ENCODE measurements at regions of chr11 and their contacts with region 1.

Region 1: GRCh38 chr11:43687120-43687791 is 6.7 kb downstream of the HSD17B12 start:
- DNase-seq: no peak
- ATAC-seq: peak; percentile 34
- H3K4me3 ChIP-seq: no peak overlapping the region
- H3K27ac ChIP-seq: peak overlapping the region; percentile 20; the same call in 1 of the 3 replicates
- H3K4me1 ChIP-seq: peaks cover 8 to 49% of the 10 kb centered on the region in 2 experiments
- H3K27me3 ChIP-seq: no peaks in the 10 kb centered on the region
- CTCF ChIP-seq: no peak
- EP300 ChIP-seq: no peak
- POLR2A ChIP-seq: no peak
- RAD21 ChIP-seq: no peak

Region 2: DNA sequence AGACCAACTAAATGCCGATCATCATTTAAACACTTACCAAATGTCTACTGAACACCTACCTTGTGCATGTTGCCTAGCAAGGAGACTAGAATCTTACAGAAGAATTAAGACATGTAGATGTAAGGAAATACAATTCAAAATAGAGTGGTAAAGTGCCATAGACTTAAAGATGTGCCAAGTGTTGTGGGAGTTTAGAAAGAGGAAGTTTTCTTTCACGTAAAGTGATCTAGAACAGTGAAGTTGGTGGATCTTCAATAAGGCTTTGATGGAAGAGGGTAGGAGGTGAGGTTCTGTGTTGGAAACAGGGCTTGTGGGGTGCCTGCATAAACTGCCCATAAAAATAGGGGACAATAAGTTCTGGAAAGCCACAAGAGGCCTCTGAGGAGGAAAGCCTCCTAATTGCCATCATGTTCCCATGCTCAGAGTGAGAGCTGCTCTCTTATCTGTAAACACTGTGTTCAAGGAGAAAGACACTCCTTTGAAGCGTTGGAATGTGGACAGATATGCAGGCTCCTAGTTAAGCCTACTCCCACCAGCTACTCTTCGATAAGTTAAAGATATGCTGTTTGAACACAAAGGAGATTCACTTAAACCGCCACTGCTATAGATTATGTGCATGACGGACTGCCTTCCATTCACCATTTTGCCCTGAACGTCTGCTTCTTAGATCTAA is 60.0 kb after region 1 on chr11:
- CTCF ChIA-PET with region 1: no interaction called
- POLR2A ChIA-PET with region 1: no interaction called
- in situ Hi-C with region 1: no loop called
- intact Hi-C with region 1: loop called (anchors 5 kb)
- DNase-seq: peak in 2 of 4 experiments; percentile 51 to 91
- ATAC-seq: peak; percentile 78
- H3K4me3 ChIP-seq: no peak overlapping the region
- H3K27ac ChIP-seq: peak overlapping the region; percentile 87
- H3K4me1 ChIP-seq: peaks cover 8 to 34% of the 10 kb centered on the region in 2 experiments
- H3K27me3 ChIP-seq: no peaks in the 10 kb centered on the region
- CTCF ChIP-seq: no peak
- EP300 ChIP-seq: peak; percentile 83; the same call in 1 of the 2 replicates
- POLR2A ChIP-seq: 0 out of 2 replicates have a peak, but pooled peaks have one; percentile 16
- RAD21 ChIP-seq: no peak; a peak in 1 of 4 replicates

Region 3: GRCh38 chr11:44379141-44380008 is 692.1 kb after region 1 on chr11:
- CTCF ChIA-PET with region 1: no interaction called
- POLR2A ChIA-PET with region 1: no interaction called
- in situ Hi-C with region 1: no loop called
- intact Hi-C with region 1: no loop called
- DNase-seq: no peak
- ATAC-seq: no peak
- H3K4me3 ChIP-seq: no peak overlapping the region
- H3K27ac ChIP-seq: no peak overlapping the region
- H3K4me1 ChIP-seq: peaks cover 0 to 13% of the 10 kb centered on the region in 2 experiments; a peak in 3 of 5 replicates
- H3K27me3 ChIP-seq: peaks cover 6 to 46% of the 10 kb centered on the region in 2 experiments; a peak in 3 of 5 replicates
- CTCF ChIP-seq: no peak
- EP300 ChIP-seq: no peak
- POLR2A ChIP-seq: no peak
- RAD21 ChIP-seq: no peak